PC-3 (cell line): ENCODE measurements at regions of chr6 and their contacts with region 1.

Region 1: GRCh38 chr6:91704531-91704930 is 1117.7 kb upstream of the MAP3K7 start:
- DNase-seq: peak; percentile 65
- ATAC-seq: peak; percentile 90
- H3K4me3 ChIP-seq: no peak overlapping the region
- H3K27ac ChIP-seq: peak overlapping the region; percentile 27
- H3K4me1 ChIP-seq: peaks cover 30% of the 10 kb centered on the region
- H3K27me3 ChIP-seq: no peaks in the 10 kb centered on the region
- CTCF ChIP-seq: no peak

Region 2: DNA sequence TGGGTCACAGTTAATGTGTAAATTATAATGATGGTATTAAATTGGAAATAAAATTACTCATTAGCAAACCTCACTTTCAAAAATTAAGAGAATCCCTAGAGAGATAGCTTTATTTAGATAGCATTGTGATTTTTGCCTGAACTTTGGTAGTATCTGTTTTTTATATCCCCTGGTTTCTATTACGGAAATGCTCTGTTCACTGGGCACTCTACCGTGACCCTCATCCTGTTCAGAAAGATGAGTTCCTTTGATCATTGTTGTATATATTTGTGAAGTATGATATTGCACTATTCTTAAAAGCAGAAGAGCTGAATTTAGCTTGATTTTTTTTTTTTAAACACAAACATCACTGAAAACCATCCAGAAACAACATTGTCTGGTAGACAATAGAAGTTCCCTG is 26.2 kb after region 1 on chr6:
- CTCF ChIA-PET with region 1: no interaction called
- POLR2A ChIA-PET with region 1: interaction called, 10 read pairs
- intact Hi-C with region 1: no loop called
- DNase-seq: no peak
- ATAC-seq: no peak
- H3K4me3 ChIP-seq: no peak overlapping the region
- H3K27ac ChIP-seq: no peak overlapping the region
- H3K4me1 ChIP-seq: no peaks in the 10 kb centered on the region
- H3K27me3 ChIP-seq: no peaks in the 10 kb centered on the region
- CTCF ChIP-seq: no peak

Region 3: GRCh38 chr6:91879386-91879995 is 175.0 kb after region 1 on chr6:
- CTCF ChIA-PET with region 1: no interaction called
- POLR2A ChIA-PET with region 1: no interaction called
- intact Hi-C with region 1: loop called (anchors 10 kb)
- DNase-seq: peak; percentile 49
- ATAC-seq: peak; percentile 46
- H3K4me3 ChIP-seq: no peak overlapping the region
- H3K27ac ChIP-seq: no peak overlapping the region
- H3K4me1 ChIP-seq: no peaks in the 10 kb centered on the region; the same call in 1 of the 2 replicates
- H3K27me3 ChIP-seq: no peaks in the 10 kb centered on the region
- CTCF ChIP-seq: no peak